ENCODE measurements at regions of chr10 and their contacts with region 1.

Region 1: GRCh38 chr10:118264838-118265510 is 77.2 kb downstream of the FAM204A start:
- DNase-seq: no peak
- H3K4me3 ChIP-seq: no peak overlapping the region
- H3K27ac ChIP-seq: no peak overlapping the region
- H3K4me1 ChIP-seq: no peaks in the 10 kb centered on the region
- H3K27me3 ChIP-seq: peaks cover 8% of the 10 kb centered on the region
- CTCF ChIP-seq: no peak

Region 2: GRCh38 chr10:118139321-118139720 is 125.7 kb before region 1 on chr10:
- CTCF ChIA-PET with region 1: no interaction called
- POLR2A ChIA-PET with region 1: no interaction called
- intact Hi-C with region 1: no loop called
- DNase-seq: no peak
- H3K4me3 ChIP-seq: no peak overlapping the region
- H3K27ac ChIP-seq: no peak overlapping the region
- H3K4me1 ChIP-seq: no peaks in the 10 kb centered on the region
- H3K27me3 ChIP-seq: no peaks in the 10 kb centered on the region
- CTCF ChIP-seq: no peak

Region 3: GRCh38 chr10:118238573-118239235 is 26.3 kb before region 1 on chr10:
- CTCF ChIA-PET with region 1: no interaction called
- POLR2A ChIA-PET with region 1: no interaction called
- intact Hi-C with region 1: no loop called
- DNase-seq: peak in 1 of 2 experiments; percentile 35
- H3K4me3 ChIP-seq: no peak overlapping the region
- H3K27ac ChIP-seq: no peak overlapping the region
- H3K4me1 ChIP-seq: no peaks in the 10 kb centered on the region
- H3K27me3 ChIP-seq: peaks cover 66% of the 10 kb centered on the region
- CTCF ChIP-seq: no peak

Region 4: DNA sequence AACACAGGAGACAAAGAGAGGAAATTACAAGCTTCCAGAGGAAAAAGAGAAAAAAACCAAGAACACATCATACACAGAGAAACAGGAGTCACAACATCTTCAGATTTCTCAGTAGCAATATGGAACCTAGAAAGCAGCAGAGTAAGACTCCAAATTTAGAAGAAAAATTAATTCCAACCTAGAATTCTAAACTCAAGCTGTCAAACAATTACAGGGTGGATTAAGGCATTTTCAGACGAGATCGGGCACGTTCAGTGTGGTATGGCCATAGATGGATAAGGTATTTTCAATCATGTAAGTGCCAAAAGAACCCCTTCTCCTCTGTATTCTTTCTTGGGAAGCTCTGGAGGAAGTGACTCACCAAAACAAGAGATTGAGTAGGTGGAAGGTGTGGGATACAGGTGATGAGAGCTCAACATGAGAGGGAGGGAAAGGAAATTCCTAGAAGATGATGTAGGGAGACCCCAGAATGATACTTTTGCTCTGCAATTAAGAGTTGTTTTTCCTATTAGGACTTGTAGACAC is 25.6 kb after region 1 on chr10:
- CTCF ChIA-PET with region 1: no interaction called
- POLR2A ChIA-PET with region 1: no interaction called
- intact Hi-C with region 1: no loop called
- DNase-seq: no peak
- H3K4me3 ChIP-seq: no peak overlapping the region
- H3K27ac ChIP-seq: no peak overlapping the region
- H3K4me1 ChIP-seq: no peaks in the 10 kb centered on the region
- H3K27me3 ChIP-seq: peaks cover 16% of the 10 kb centered on the region
- CTCF ChIP-seq: no peak

Region 5: GRCh38 chr10:118423800-118424479 is 159.0 kb after region 1 on chr10:
- CTCF ChIA-PET with region 1: no interaction called
- POLR2A ChIA-PET with region 1: no interaction called
- intact Hi-C with region 1: loop called (anchors 10 kb)
- DNase-seq: peak; percentile 61 to 72
- H3K4me3 ChIP-seq: no peak overlapping the region
- H3K27ac ChIP-seq: no peak overlapping the region
- H3K4me1 ChIP-seq: no peaks in the 10 kb centered on the region
- H3K27me3 ChIP-seq: no peaks in the 10 kb centered on the region
- CTCF ChIP-seq: peak; percentile 81